ENCODE measurements at regions of chr4 and their contacts with region 1.

Region 1: GRCh38 chr4:41934815-41935651 is at the start of gene TMEM33:
- DNase-seq: peak; percentile 79 to 98 (median 90)

Region 2: DNA sequence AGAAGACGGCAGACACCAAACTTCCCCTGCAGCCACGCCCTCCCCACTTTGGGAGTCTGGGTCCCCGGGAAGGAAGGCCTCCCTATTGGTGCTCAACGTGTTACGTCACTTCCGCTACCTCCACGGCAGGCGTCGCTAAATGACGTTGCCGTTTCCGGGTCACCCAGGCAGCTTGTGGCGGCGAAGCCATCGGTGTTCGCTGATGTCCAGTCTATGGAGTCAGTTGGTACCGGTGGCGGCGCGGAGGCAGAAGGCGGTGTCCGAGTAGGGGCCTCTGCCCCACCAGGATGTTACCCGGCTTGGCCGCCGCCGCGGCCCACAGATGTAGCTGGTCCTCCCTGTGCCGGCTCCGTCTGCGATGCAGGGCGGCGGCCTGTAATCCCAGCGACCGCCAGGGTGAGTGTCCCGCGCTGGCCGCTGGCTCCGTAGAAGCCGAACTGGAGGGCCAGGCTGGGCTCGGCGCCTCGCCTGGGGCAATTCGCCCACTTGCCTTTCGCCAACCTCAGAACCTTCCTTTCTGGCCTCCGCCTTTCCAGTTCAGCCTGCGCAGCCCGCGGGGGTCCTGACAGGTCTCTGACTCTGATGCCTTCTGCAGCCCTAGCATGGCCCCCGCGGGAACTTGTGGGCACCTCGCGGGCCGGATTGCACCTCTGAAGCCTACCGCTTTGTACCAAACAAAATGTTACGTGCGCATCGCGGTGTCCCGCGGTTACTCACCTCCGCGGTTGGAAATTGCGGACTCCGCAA is 55.5 kb after region 1 on chr4 and contains the start of gene SLC30A9:
- intact Hi-C with region 1: loop called (anchors 1 kb)
- DNase-seq: peak; percentile 94 to 99 (median 97)

Region 3: GRCh38 chr4:42172128-42172790 is 237.2 kb after region 1 on chr4:
- intact Hi-C with region 1: no loop called
- DNase-seq: no peak

Measured in posterior cingulate gyrus (tissue), 11 donors.